ENCODE measurements at regions of chr2 and their contacts with region 1.

Region 1: DNA sequence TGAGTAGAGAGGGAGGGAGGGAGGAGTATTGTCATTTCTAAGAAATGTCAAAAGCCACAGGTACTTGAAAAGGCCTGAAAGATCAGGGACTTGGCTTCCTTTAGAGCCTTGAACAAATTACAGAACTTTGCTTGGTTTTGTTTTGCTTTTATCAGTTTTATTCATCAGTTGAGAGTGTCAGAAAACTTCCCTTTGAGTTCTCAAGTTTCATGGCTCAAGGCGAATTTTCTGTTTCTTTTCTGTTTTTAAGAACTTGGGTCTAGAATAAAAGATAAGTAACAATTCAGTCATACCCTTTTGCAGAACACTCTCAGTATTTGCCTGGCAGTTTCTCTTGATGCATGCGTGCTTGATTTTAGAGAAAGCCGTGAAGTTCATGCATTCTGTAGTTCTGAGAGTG is 531.9 kb downstream of the PARD3B start:
- DNase-seq: peak; percentile 11
- H3K4me3 Mint-ChIP-seq: no peak overlapping the region
- H3K27ac Mint-ChIP-seq: peak overlapping the region; percentile 43
- H3K4me1 Mint-ChIP-seq: peaks cover 40% of the 10 kb centered on the region
- H3K27me3 Mint-ChIP-seq: no peaks in the 10 kb centered on the region

Region 2: DNA sequence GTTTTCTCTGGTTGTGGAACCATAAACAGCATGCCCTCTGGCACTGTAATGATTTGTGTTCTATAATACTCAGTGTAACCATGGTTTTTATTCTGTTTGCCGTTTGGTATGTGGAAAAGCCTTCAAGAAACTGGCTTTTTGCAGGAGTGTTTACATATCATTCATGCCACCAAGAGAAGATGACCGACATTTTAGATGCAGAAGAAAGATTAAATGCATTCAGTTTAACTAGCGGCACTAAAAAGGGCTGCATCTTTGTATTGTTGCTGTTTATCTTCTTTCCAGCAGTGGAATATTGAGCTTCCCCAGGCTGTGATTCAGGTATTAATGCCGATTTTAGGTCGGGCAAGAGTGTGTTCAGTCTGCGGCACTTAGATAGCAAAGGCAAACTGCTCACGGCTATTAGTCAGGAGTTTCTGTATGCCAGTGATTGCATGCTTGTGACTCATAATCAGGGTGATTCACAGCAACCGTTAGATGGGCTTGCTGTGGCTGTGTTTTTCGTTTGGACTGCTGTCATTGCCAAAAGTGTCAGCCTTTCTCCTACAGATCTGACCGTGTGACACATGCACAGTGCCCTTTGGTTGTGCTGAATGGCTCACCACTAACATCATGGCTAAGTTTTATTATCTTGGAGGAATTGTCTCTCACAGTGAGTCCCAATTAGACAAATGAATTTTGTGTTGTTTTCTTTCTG is 52.2 kb before region 1 on chr2:
- CTCF ChIA-PET with region 1: no interaction called
- POLR2A ChIA-PET with region 1: no interaction called
- intact Hi-C with region 1: loop called (anchors 1 kb)
- DNase-seq: peak; percentile 68
- H3K4me3 Mint-ChIP-seq: no peak overlapping the region
- H3K27ac Mint-ChIP-seq: peak overlapping the region; percentile 20
- H3K4me1 Mint-ChIP-seq: peaks cover 19% of the 10 kb centered on the region
- H3K27me3 Mint-ChIP-seq: no peaks in the 10 kb centered on the region